Natural killer cell (primary cell): ENCODE measurements at regions of chr7 and their contacts with region 1.

Region 1: GRCh38 chr7:28853834-28854749 is 104.0 kb downstream of the TRIL start:
- DNase-seq: peak; percentile 58 to 69
- ATAC-seq: peak; percentile 70 to 98 (median 89)
- H3K4me3 ChIP-seq: peak overlapping the region; percentile 36
- H3K4me3 Mint-ChIP-seq: peak overlapping the region; percentile 83
- H3K27ac ChIP-seq: no peak overlapping the region
- H3K27ac Mint-ChIP-seq: no peak overlapping the region
- H3K4me1 ChIP-seq: peaks cover 6% of the 10 kb centered on the region
- H3K4me1 Mint-ChIP-seq: peaks cover 7 to 15% of the 10 kb centered on the region in 2 donors
- H3K27me3 ChIP-seq: peaks cover 34% of the 10 kb centered on the region
- H3K27me3 Mint-ChIP-seq: peaks cover 52 to 70% of the 10 kb centered on the region in 2 donors
- CTCF ChIP-seq: peak; percentile 67

Region 2: DNA sequence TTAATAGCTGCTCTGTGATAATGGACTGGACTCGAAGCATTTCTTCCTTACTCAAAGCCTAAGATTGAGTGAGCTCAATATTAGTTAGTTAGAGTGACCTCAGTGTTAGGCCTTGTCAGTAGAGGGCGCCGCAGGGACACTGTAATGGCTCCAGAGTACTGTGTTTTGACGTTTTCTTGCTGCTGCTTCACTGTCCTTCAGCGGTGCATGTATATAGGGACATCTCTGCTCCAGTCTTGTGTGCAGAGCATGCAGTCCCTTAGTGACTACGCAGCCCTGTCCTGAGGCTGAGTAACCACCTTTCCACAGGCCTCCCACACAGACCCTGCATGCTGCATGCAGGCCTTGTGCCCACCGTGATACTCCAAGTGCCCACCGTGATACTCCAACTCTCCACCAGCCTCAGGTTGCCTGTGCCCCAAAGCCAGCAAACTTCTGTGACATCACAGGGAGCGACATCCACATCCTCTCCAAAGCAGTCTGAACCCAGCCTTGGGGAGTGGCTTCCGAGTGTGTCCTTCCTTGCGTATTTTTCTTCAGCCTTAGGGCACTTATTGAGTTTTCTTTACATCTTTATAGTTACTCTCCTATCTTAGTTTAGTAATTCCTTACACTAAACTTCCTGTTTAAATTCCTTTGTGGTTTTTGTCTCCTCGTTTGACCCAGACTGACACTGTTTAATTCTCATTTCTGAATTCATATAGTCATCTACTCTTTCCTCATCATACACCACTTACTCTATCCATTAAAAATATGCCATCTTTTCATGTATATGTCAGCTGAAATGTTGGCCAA is 791.7 kb before region 1 on chr7:
- intact Hi-C with region 1: loop called (anchors 5 kb)
- DNase-seq: peak; percentile 49 to 65
- ATAC-seq: peak; percentile 93 to 96 (median 95)
- H3K4me3 ChIP-seq: no peak overlapping the region
- H3K4me3 Mint-ChIP-seq: no peak overlapping the region
- H3K27ac ChIP-seq: no peak overlapping the region
- H3K27ac Mint-ChIP-seq: peak overlapping the region in 1 of 2 donors; percentile 37
- H3K4me1 ChIP-seq: peaks cover 5% of the 10 kb centered on the region
- H3K4me1 Mint-ChIP-seq: peaks cover 50 to 51% of the 10 kb centered on the region in 2 donors
- H3K27me3 ChIP-seq: no peaks in the 10 kb centered on the region
- H3K27me3 Mint-ChIP-seq: no peaks in the 10 kb centered on the region
- CTCF ChIP-seq: peak; percentile 74

Region 3: DNA sequence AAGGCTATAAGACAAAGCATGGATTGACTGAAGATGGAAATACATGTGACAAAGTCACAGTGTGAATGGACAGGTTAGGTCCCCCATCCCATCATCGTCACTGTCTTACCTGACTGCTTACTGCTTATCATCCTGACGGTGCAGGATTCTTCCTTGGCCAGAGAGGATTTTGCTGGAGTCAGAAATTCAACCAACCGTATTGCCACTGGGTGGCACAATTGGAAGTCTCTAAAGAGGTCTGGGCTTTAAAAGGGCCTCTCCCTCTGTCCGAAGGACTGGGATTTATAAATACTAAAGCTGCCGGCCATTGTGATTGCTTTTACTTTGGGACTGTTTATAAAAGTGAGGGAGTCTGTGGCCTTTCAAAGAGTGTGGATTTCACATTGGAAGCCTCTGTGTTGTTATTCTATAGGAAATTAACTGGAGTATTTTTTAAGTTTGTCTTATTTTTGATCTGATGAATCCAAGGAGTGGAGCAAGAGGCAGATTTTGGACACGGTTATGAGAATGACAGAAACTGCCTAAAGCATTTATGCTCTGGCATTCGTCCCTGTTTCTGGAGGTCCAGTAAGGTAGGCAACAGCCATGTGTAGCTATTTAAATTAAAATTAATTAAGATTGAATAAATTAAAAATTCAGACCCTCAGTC is 555.1 kb before region 1 on chr7:
- intact Hi-C with region 1: loop called (anchors 2 kb)
- DNase-seq: no peak
- ATAC-seq: no peak
- H3K4me3 ChIP-seq: no peak overlapping the region
- H3K4me3 Mint-ChIP-seq: no peak overlapping the region
- H3K27ac ChIP-seq: no peak overlapping the region
- H3K27ac Mint-ChIP-seq: no peak overlapping the region
- H3K4me1 ChIP-seq: no peaks in the 10 kb centered on the region
- H3K4me1 Mint-ChIP-seq: no peaks in the 10 kb centered on the region
- H3K27me3 ChIP-seq: no peaks in the 10 kb centered on the region
- H3K27me3 Mint-ChIP-seq: peaks cover 6 to 7% of the 10 kb centered on the region in 2 donors
- CTCF ChIP-seq: no peak

Region 4: GRCh38 chr7:28389504-28390395 is 464.3 kb before region 1 on chr7:
- intact Hi-C with region 1: loop called (anchors 10 kb)
- DNase-seq: peak in 1 of 2 donors; percentile 52
- ATAC-seq: no peak
- H3K4me3 ChIP-seq: no peak overlapping the region
- H3K4me3 Mint-ChIP-seq: no peak overlapping the region
- H3K27ac ChIP-seq: no peak overlapping the region
- H3K27ac Mint-ChIP-seq: no peak overlapping the region
- H3K4me1 ChIP-seq: no peaks in the 10 kb centered on the region
- H3K4me1 Mint-ChIP-seq: peaks cover 5 to 6% of the 10 kb centered on the region in 2 donors
- H3K27me3 ChIP-seq: peaks cover 3% of the 10 kb centered on the region
- H3K27me3 Mint-ChIP-seq: peaks cover 34 to 66% of the 10 kb centered on the region in 2 donors
- CTCF ChIP-seq: peak; percentile 73

Region 5: DNA sequence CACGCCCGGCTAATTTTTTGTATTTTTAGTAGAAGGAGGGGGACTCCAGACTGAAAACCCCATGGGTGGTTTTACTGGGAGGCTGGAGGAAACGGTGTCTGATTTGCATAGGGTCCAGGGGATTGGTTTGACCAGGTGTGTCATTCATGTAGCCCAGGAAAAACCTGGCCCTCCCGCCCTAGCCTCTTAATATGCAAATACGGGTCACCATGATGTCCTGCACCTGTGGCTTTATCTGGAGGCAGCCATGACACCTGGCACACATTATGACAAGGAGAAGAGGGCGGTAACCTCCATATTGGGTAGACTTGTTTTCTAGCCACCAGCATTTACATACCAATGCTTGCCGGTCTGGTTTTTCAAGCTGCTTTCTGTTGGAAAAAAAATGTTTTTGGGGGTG is 36.0 kb after region 1 on chr7:
- intact Hi-C with region 1: no loop called
- DNase-seq: no peak
- ATAC-seq: no peak
- H3K4me3 ChIP-seq: no peak overlapping the region
- H3K4me3 Mint-ChIP-seq: no peak overlapping the region
- H3K27ac ChIP-seq: no peak overlapping the region
- H3K27ac Mint-ChIP-seq: no peak overlapping the region
- H3K4me1 ChIP-seq: no peaks in the 10 kb centered on the region
- H3K4me1 Mint-ChIP-seq: no peaks in the 10 kb centered on the region
- H3K27me3 ChIP-seq: peaks cover 8% of the 10 kb centered on the region
- H3K27me3 Mint-ChIP-seq: peaks cover 18 to 26% of the 10 kb centered on the region in 2 donors
- CTCF ChIP-seq: no peak